Esophagus muscularis mucosa (tissue), 4 donors: ENCODE measurements at regions of chr6 and their contacts with region 1.

Region 1: DNA sequence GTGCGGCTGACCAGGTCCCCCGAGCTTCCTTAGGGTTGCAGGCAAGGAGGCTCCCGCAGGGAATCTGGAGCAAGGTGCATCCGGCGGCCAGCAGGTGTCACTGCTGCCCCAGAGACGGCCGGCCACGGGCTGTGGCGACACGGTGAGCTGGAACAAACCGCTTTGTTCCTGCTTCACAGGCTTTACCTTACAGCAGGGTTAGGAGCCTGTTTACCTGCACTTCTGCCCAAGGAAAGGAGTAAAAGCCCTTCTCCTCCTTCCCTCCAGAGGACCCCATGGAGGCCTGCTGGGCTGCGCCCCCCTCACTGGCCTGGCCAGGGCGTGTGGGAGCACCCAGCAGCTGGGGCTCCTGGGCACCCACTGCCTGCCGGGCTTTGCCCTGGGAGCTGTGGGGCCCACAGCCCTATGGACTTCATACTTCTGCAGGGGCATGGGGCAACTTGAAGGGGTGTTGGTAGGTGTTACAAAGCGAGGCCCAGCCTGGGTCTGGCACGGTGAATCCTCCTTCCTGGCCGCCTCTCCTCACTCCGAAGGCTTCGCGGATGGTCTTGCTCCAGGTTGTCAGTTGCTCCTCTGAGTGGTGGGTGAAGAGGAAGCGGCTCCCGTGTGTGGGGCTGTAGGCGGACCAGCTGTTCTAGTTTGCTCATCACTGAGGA is 88.4 kb downstream of the CDC5L start:
- DNase-seq: peak; percentile 94
- H3K4me3 ChIP-seq: peak overlapping the region in 3 of 4 donors; percentile 8 to 20 (median 10)
- H3K27ac ChIP-seq: peak overlapping the region in 1 of 4 donors; percentile 21
- H3K4me1 ChIP-seq: peaks cover 8 to 12% (median 10%) of the 10 kb centered on the region in 4 donors
- H3K27me3 ChIP-seq: peaks cover 0 to 12% (median 0%) of the 10 kb centered on the region in 4 donors
- CTCF ChIP-seq: peak; percentile 89 to 97 (median 95)
- EP300 ChIP-seq: no peak
- POLR2A ChIP-seq: no peak

Region 2: DNA sequence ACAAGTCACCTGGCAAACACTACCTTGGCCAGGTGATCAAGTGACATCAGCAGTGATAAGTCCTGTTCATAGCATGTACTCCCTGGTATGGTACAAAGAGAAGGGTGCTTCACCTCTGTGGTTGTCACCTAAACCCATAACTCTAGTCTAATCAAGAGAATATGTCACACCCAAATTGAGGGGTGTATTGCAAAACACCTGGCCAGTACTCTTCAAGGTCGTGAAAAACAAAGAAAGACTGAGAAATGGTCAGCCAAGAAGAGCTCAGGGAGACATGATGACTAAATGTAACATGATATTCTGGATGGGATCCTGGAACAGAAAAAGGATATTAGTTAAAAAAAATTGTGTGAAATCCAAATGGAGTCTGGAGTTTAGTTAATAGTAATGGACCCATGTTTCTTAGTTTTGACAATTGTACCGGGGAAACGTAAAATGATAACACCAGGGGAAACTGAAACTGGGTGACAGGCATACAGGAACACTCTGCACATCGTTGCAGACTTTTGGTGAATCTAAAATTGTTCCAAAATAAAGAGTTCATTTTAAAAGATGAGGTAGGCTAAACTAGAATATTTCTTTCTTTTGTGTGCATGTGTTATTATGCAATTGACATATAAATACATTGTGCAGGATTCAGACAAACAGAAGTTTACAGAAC is 173.6 kb after region 1 on chr6:
- intact Hi-C with region 1: loop called (anchors 5 kb)
- DNase-seq: no peak
- H3K4me3 ChIP-seq: no peak overlapping the region
- H3K27ac ChIP-seq: no peak overlapping the region
- H3K4me1 ChIP-seq: peaks cover 0 to 13% (median 12%) of the 10 kb centered on the region in 4 donors
- H3K27me3 ChIP-seq: no peaks in the 10 kb centered on the region
- CTCF ChIP-seq: no peak
- EP300 ChIP-seq: no peak
- POLR2A ChIP-seq: no peak

Region 3: DNA sequence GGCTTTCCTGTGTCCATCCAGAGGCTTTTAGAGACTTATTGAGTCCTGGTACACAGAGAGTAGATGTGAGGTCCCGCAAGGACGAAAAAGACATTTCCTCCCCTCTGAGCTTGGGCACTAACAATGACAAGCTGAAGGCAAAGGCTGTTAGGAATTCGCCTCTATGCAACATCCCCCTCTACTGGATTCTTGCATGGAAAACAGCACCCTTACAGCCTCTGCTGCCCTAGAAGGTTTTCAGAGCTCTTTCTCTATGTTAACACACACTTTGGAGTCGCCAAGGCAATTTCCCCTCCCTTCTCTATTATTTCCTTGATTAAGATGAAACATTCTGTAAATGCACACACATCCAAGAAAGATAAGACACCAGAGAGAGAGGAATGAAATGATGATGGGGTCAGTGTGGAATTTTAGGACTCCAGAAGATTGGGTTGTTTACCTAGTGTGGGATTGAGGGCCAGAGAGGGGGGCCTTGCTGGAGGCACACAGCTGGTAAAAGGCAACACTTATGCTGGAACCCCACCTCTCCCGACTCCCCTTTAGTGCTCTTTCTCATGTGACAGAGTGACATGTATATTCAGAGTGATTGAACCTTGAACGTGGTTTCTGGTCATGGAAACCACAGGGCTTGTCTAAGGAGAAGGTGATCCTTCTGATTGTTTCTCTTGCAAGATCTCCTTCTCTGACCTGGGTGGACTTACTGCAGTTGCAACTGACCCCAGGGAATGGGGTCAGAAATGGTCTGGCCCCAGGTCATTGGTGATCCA is 1239.0 kb after region 1 on chr6:
- intact Hi-C with region 1: loop called (anchors 10 kb)
- DNase-seq: no peak
- H3K4me3 ChIP-seq: no peak overlapping the region
- H3K27ac ChIP-seq: no peak overlapping the region
- H3K4me1 ChIP-seq: peaks cover 0 to 9% (median 5%) of the 10 kb centered on the region in 4 donors
- H3K27me3 ChIP-seq: peaks cover 0 to 21% (median 0%) of the 10 kb centered on the region in 4 donors
- CTCF ChIP-seq: peak; percentile 64 to 79 (median 69)
- EP300 ChIP-seq: no peak
- POLR2A ChIP-seq: no peak

Region 4: DNA sequence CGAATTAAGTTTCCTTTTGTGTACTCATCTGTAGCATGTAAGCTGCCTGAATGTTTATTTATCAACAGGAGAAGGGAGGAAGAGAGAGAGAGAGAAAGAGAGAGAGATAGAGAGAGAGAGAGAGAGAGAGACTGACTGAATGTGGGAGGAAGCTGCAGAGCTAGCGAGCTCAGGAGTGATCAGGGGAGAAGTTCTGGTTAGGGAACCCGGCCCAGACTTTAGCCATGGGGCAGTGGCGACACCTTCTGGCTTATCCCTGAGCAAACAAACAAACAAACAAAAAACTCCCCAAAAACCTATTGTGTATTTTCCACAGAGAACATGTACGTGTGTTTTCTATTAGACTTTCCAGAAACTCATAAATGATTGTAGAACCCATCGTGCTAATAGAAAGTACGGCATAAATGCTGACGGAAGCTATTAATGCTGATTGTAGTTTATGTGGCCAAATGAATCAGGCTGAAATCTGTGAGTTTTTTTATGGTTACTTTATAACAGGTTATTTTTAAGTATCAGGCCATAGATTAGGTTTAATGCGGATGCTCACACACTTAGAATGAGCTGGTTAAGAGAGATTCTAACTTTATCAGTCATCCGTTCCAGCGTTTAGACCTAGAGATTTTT is 1446.9 kb after region 1 on chr6:
- intact Hi-C with region 1: loop called (anchors 5 kb)
- DNase-seq: no peak
- H3K4me3 ChIP-seq: no peak overlapping the region
- H3K27ac ChIP-seq: no peak overlapping the region
- H3K4me1 ChIP-seq: peaks cover 8 to 23% (median 11%) of the 10 kb centered on the region in 4 donors
- H3K27me3 ChIP-seq: no peaks in the 10 kb centered on the region
- CTCF ChIP-seq: peak; percentile 33 to 46 (median 36)
- EP300 ChIP-seq: no peak
- POLR2A ChIP-seq: no peak